Activated B cell treated with CpG ODN at 0.5 μM for 24 hours (primary cell): ENCODE measurements at regions of chr7 and their contacts with region 1.

Region 1: DNA sequence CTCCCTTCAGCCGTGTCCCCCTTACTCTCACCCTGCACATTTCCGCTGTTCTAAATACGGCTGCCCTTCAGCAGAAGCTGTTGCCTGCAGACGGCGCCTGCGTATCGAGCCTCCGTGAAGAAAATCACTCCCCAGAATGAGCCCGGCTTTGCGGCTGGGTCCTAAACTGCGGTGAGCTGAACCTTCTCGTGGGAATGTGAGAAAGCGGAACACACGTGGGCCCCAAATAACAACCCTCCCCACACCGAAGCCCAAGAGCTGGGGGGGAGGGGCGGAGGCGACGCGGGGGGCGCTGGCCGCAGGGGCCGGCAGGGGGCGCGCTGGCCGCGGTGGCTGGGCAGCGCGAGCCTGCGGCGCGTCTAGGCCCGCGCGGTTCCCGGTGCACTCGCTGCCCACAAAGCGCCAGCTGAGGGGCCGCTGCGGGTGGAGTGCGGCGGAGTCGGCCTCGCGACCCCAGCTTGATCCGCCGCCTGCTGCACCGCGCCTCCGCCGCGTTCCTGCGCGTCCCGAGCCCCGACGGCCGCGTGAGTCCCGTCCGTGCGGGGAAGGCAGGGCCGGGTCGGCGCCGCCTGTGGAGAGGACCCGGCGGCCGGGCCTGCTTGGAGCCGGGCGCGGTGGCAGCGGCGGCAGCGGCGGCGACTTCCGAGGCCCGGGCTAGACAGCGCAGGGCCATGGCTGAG is at the start of gene ZNF398:
- DNase-seq: peak; percentile 87
- ATAC-seq: peak; percentile 84
- H3K4me3 Mint-ChIP-seq: peak within 1 kb of the TSS; percentile 91
- H3K27ac Mint-ChIP-seq: peak within 1 kb of the TSS; percentile 94
- H3K4me1 Mint-ChIP-seq: peaks cover 32% of the 10 kb centered on the region
- H3K27me3 Mint-ChIP-seq: no peaks in the 10 kb centered on the region
- CTCF ChIP-seq: no peak
- total RNA-seq, gene ZNF398: 15.1 and 17.3 TPM in 2 replicates

Region 2: GRCh38 chr7:149028346-149029109 is 118.7 kb before region 1 on chr7 and contains the start of gene PDIA4:
- CTCF ChIA-PET with region 1: no interaction called
- POLR2A ChIA-PET with region 1: interaction called, 9 read pairs
- intact Hi-C with region 1: loop called (anchors 1 kb)
- DNase-seq: peak; percentile 99
- ATAC-seq: peak; percentile 87
- H3K4me3 Mint-ChIP-seq: peak within 1 kb of the TSS; percentile 92
- H3K27ac Mint-ChIP-seq: peak within 1 kb of the TSS; percentile 89
- H3K4me1 Mint-ChIP-seq: peaks cover 39% of the 10 kb centered on the region
- H3K27me3 Mint-ChIP-seq: no peaks in the 10 kb centered on the region
- CTCF ChIP-seq: no peak
- total RNA-seq, gene PDIA4: 57.4 and 59.4 TPM in 2 replicates

Region 3: GRCh38 chr7:149195180-149196150 is 48.3 kb after region 1 on chr7 and contains the start of gene ZNF282:
- CTCF ChIA-PET with region 1: interaction called, 4 read pairs
- POLR2A ChIA-PET with region 1: interaction called, 10 read pairs
- intact Hi-C with region 1: loop called (anchors 1 kb)
- DNase-seq: peak; percentile 68
- ATAC-seq: peak; percentile 88
- H3K4me3 Mint-ChIP-seq: peak within 1 kb of the TSS; percentile 89
- H3K27ac Mint-ChIP-seq: peak within 1 kb of the TSS; percentile 66
- H3K4me1 Mint-ChIP-seq: peaks cover 31% of the 10 kb centered on the region
- H3K27me3 Mint-ChIP-seq: no peaks in the 10 kb centered on the region
- CTCF ChIP-seq: no peak
- total RNA-seq, gene ZNF282: 21.6 and 21.7 TPM in 2 replicates

Region 4: GRCh38 chr7:149261829-149262617 is 114.8 kb after region 1 on chr7 and contains the start of gene ZNF783:
- CTCF ChIA-PET with region 1: interaction called, 3 read pairs
- POLR2A ChIA-PET with region 1: interaction called, 12 read pairs
- intact Hi-C with region 1: loop called (anchors 1 kb)
- DNase-seq: peak; percentile 88
- ATAC-seq: peak; percentile 91
- H3K4me3 Mint-ChIP-seq: peak within 1 kb of the TSS; percentile 89
- H3K27ac Mint-ChIP-seq: peak within 1 kb of the TSS; percentile 90
- H3K4me1 Mint-ChIP-seq: peaks cover 23% of the 10 kb centered on the region
- H3K27me3 Mint-ChIP-seq: no peaks in the 10 kb centered on the region
- CTCF ChIP-seq: no peak
- total RNA-seq, gene ZNF783: 28.5 and 34.1 TPM in 2 replicates

Region 5: GRCh38 chr7:149430192-149430591 is 283.0 kb after region 1 on chr7:
- CTCF ChIA-PET with region 1: no interaction called
- POLR2A ChIA-PET with region 1: no interaction called
- intact Hi-C with region 1: no loop called
- DNase-seq: no peak
- ATAC-seq: no peak
- H3K4me3 Mint-ChIP-seq: no peak overlapping the region
- H3K27ac Mint-ChIP-seq: no peak overlapping the region
- H3K4me1 Mint-ChIP-seq: no peaks in the 10 kb centered on the region
- H3K27me3 Mint-ChIP-seq: no peaks in the 10 kb centered on the region
- CTCF ChIP-seq: no peak